PC-9 (cell line): ENCODE measurements at regions of chr2 and their contacts with region 1.

Region 1: GRCh38 chr2:102615622-102616436 is 3.5 kb upstream of the SLC9A2 start:
- DNase-seq: peak; percentile 48 to 51
- H3K4me3 ChIP-seq: no peak overlapping the region
- H3K27ac ChIP-seq: no peak overlapping the region
- H3K4me1 ChIP-seq: peaks cover 19% of the 10 kb centered on the region
- H3K27me3 ChIP-seq: no peaks in the 10 kb centered on the region
- CTCF ChIP-seq: peak; percentile 94

Region 2: GRCh38 chr2:102251042-102251848 is 364.6 kb before region 1 on chr2:
- CTCF ChIA-PET with region 1: no interaction called
- POLR2A ChIA-PET with region 1: no interaction called
- intact Hi-C with region 1: loop called (anchors 5 kb)
- DNase-seq: peak in 1 of 2 experiments; percentile 69
- H3K4me3 ChIP-seq: peak overlapping the region; percentile 6; the same call in 1 of the 2 replicates
- H3K27ac ChIP-seq: no peak overlapping the region
- H3K4me1 ChIP-seq: peaks cover 9% of the 10 kb centered on the region
- H3K27me3 ChIP-seq: no peaks in the 10 kb centered on the region
- CTCF ChIP-seq: peak; percentile 48

Region 3: GRCh38 chr2:102449370-102449974 is 166.4 kb before region 1 on chr2:
- CTCF ChIA-PET with region 1: interaction called, 4 read pairs
- POLR2A ChIA-PET with region 1: interaction called, 9 read pairs
- intact Hi-C with region 1: loop called (anchors 5 kb)
- DNase-seq: peak in 1 of 2 experiments; percentile 41
- H3K4me3 ChIP-seq: no peak overlapping the region
- H3K27ac ChIP-seq: no peak overlapping the region
- H3K4me1 ChIP-seq: no peaks in the 10 kb centered on the region
- H3K27me3 ChIP-seq: no peaks in the 10 kb centered on the region
- CTCF ChIP-seq: peak; percentile 83

Region 4: DNA sequence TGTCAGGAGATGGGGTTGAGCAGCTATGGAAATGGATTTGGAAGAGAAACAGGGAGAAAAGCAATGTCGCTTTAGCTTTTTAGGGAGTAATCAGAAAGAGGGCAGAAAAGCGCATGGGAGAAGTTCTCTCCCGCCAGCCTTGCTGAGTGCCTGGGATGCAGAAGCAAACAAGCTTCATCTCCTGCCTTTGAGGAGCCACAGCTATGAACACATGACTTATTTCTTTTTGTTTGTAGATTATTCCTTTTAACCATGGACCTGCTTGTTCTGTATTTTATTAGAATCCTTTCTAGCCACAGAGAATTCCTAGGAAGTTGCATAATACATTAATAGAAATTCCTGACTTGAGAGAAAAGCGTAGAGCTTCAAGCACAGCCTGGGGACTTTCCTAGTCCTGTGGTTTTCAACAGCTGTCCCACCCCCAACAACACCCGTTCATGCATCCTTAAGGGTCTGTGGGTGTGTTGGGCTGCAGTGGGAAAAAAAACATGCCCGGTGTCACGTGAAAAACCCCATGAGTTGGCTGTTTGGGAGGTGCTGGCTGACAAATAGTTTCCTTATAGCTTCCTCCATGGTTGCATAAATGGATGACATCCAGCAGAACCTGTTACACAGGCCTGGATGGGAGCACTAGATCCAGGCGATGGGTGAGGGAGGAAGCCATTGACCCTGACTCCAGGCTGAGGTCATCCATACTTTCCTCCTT is 127.9 kb before region 1 on chr2:
- CTCF ChIA-PET with region 1: no interaction called
- POLR2A ChIA-PET with region 1: no interaction called
- intact Hi-C with region 1: loop called (anchors 1 kb)
- DNase-seq: peak; percentile 87 to 99
- H3K4me3 ChIP-seq: peak overlapping the region; percentile 3; the same call in 1 of the 2 replicates
- H3K27ac ChIP-seq: peak overlapping the region; percentile 91
- H3K4me1 ChIP-seq: peaks cover 38% of the 10 kb centered on the region
- H3K27me3 ChIP-seq: no peaks in the 10 kb centered on the region
- CTCF ChIP-seq: no peak

Region 5: DNA sequence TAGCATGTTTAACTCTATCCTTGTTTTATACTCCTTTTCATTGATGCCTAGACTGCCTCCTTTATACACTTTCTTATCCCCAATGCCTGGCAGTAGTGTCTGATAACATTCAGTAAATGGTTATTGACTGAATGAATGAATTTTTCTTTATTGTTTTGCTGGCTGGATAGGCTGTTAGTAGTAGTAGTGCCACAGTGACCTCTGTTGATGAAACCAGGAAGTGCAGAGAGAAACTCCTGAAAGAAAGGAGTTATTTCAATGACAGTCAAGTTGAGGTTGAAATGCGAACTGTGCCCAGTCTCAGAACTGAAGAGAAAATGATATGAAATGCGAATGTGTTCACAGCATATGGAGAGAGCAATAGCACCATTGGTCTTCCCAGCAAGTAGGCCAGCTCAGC is 23.2 kb before region 1 on chr2:
- CTCF ChIA-PET with region 1: interaction called, 10 read pairs
- POLR2A ChIA-PET with region 1: no interaction called
- intact Hi-C with region 1: loop called (anchors 1 kb)
- DNase-seq: peak in 1 of 2 experiments; percentile 21
- H3K4me3 ChIP-seq: no peak overlapping the region
- H3K27ac ChIP-seq: no peak overlapping the region
- H3K4me1 ChIP-seq: peaks cover 32% of the 10 kb centered on the region
- H3K27me3 ChIP-seq: no peaks in the 10 kb centered on the region
- CTCF ChIP-seq: peak; percentile 71

Region 6: GRCh38 chr2:102703748-102704147 is 87.9 kb after region 1 on chr2:
- CTCF ChIA-PET with region 1: interaction called, 12 read pairs
- POLR2A ChIA-PET with region 1: no interaction called
- intact Hi-C with region 1: loop called (anchors 1 kb)
- DNase-seq: peak in 1 of 2 experiments; percentile 55
- H3K4me3 ChIP-seq: no peak overlapping the region
- H3K27ac ChIP-seq: no peak overlapping the region
- H3K4me1 ChIP-seq: peaks cover 5% of the 10 kb centered on the region; the same call in 1 of the 2 replicates
- H3K27me3 ChIP-seq: no peaks in the 10 kb centered on the region
- CTCF ChIP-seq: peak; percentile 73